ENCODE measurements at regions of chr18 and their contacts with region 1.

Region 1: DNA sequence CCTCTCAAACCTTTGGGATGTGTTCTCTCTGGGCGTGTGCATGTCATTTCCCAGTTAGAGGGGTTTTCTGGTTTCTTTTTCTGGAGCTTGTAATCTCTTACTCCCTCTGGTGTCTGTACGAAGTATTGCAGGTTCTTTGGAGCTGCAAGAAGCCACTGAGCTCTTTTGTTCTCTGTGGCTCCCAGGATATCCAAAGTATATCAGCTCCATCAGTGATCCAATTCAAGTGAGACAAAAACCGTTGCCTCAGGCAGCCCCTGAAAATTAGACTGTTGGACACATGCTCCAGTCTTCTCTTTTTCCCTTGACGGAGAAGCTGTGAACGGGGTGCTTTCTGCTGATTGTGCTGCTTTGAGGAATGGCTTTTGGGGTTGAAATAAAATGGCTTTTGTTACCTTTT is 59.0 kb upstream of the LDLRAD4 start:
- DNase-seq: peak; percentile 41
- H3K4me3 ChIP-seq: no peak overlapping the region
- H3K27ac ChIP-seq: no peak overlapping the region
- H3K27me3 ChIP-seq: peaks cover 3% of the 10 kb centered on the region
- CTCF ChIP-seq: peak; percentile 89

Region 2: GRCh38 chr18:12726774-12727550 is 432.6 kb before region 1 on chr18:
- CTCF ChIA-PET with region 1: interaction called, 14 read pairs
- POLR2A ChIA-PET with region 1: no interaction called
- DNase-seq: peak; percentile 60
- H3K4me3 ChIP-seq: no peak overlapping the region
- H3K27ac ChIP-seq: no peak overlapping the region
- H3K27me3 ChIP-seq: no peaks in the 10 kb centered on the region
- CTCF ChIP-seq: peak; percentile 89

Region 3: GRCh38 chr18:13003466-13003896 is 156.1 kb before region 1 on chr18:
- CTCF ChIA-PET with region 1: interaction called, 19 read pairs
- POLR2A ChIA-PET with region 1: no interaction called
- DNase-seq: peak; percentile 29
- H3K4me3 ChIP-seq: no peak overlapping the region
- H3K27ac ChIP-seq: no peak overlapping the region
- H3K27me3 ChIP-seq: no peaks in the 10 kb centered on the region
- CTCF ChIP-seq: peak; percentile 57

Region 4: GRCh38 chr18:13112982-13113381 is 46.6 kb before region 1 on chr18:
- CTCF ChIA-PET with region 1: interaction called, 27 read pairs
- POLR2A ChIA-PET with region 1: no interaction called
- DNase-seq: no peak
- H3K4me3 ChIP-seq: no peak overlapping the region
- H3K27ac ChIP-seq: no peak overlapping the region
- H3K27me3 ChIP-seq: no peaks in the 10 kb centered on the region
- CTCF ChIP-seq: peak; percentile 52

Region 5: DNA sequence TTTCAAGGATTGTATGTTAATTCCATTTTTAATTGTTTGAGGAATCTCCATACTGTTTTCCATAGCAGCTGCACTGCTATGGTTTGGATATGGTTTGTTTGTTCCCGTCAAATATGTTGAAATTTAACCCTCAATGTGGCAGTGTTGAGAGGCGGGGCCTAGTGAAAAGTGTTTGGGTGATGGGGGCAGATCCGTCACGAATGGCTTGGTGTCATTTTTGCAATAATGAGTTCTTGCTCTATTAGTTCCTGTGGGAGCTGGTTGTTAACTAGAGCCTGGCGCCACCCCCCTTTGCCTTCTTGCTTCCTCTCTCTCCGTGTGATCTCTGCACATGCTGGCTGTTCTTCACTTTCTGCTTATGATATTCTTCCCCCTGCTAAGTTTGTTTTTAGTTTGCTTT is 12.4 kb before region 1 on chr18:
- CTCF ChIA-PET with region 1: interaction called, 11 read pairs
- POLR2A ChIA-PET with region 1: no interaction called
- DNase-seq: no peak
- H3K4me3 ChIP-seq: no peak overlapping the region
- H3K27ac ChIP-seq: no peak overlapping the region
- H3K27me3 ChIP-seq: peaks cover 5% of the 10 kb centered on the region
- CTCF ChIP-seq: no peak

Region 6: DNA sequence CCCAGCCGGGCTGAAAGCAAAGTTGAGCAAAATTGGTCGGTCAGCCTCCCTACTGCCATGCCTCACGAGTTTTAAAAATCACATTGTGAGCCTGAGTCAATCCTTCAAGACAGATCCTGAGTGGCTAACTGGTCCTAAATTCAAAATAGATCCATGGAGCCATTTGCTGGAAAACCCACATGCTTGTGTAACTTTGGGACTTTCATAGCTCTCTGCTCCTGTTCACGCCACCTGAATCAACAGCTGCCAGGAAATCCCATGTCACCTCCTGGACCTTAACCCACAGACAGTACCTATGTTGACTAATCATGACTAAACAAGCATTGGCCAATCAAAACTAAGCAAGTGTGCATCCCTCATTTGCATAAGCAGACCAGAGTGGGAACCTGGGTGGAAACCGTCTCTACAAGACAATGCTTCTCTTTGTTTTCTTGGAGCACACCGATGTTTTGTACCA is 16.2 kb after region 1 on chr18:
- CTCF ChIA-PET with region 1: interaction called, 14 read pairs
- POLR2A ChIA-PET with region 1: no interaction called
- DNase-seq: no peak
- H3K4me3 ChIP-seq: no peak overlapping the region
- H3K27ac ChIP-seq: no peak overlapping the region
- H3K27me3 ChIP-seq: no peaks in the 10 kb centered on the region
- CTCF ChIP-seq: no peak

Measured in AG04450 (cell line).